ENCODE measurements at regions of chr4 and their contacts with region 1.

Region 1: DNA sequence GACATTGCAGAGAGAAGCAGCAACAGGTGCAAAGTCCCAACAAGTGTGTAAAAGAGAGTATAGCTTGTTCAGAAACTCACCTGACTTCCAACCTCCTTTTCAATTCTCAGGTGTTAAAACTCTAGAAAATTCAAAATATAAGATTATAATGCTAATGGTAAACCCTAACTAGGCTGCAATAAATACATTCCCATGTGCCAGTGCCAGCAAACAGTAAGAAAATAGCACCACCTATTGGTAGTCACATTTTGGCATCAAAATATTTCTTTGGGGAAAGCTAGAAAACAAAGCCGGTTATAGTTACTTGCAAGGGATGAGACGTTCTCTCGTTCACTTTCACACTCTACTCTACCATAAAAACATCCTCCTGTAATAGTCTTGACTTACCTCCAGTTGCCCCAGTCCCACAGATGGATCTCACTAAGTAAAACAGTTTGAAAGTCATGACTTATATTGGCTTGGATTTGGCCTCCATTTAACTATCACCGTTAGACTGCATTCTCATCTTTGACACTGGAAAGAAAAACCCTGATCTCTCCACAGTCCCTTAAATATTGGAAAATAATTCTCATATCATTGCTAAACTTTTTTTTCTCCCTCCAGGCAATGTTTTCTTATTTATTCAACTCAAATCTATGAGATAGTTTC is 9.6 kb downstream of the BMP3 start:
- DNase-seq: peak; percentile 25
- H3K27ac ChIP-seq: no peak overlapping the region
- CTCF ChIP-seq: peak; percentile 52

Region 2: GRCh38 chr4:80362578-80363181 is 677.5 kb before region 1 on chr4:
- CTCF ChIA-PET with region 1: interaction called, 15 read pairs
- POLR2A ChIA-PET with region 1: no interaction called
- DNase-seq: peak; percentile 21
- H3K27ac ChIP-seq: no peak overlapping the region
- CTCF ChIP-seq: peak; percentile 45

Region 3: DNA sequence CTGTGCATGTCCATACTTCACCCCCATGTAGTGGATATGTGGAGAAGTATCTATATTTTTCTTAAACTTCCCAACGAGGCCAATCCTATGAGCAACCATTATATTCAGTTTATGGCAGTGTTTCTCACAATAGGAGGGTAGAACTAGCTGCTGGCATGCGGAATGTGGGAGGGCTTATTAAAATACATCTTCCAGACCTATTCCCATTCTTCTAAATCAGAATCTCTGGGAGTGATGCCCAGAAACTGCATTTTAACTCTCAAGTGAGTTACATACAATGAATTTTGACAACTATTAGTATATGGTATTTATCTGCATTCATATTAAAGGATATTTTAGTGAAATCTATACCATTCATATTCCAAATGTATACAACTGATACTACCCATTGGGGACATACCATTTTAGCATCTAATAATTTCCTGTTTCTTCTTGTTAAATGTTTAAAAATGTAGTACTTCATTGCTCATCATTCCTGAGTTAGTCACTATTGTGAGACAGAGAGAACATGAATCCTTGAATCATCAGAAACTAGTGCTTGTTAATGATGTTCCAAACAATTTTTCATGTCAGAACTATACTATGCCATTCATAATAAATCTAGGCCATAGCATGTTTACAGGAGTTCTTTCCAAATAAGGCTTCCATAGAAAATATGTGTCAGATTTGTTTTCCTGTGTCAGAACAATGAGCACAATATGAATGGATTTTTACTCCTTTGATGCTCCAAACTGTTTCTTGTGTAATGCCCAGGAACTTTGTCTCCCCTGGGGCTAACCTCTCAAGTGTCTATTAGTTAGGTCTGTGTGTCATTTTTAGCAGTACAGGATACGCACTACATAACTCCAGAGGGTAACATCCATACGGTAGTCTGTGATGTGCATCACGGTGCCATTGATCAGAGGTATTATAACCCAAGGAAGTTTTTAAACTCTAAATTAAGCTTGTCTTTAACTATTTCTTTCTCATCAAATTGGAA is 208.5 kb before region 1 on chr4:
- CTCF ChIA-PET with region 1: no interaction called
- POLR2A ChIA-PET with region 1: no interaction called
- DNase-seq: peak; percentile 21
- H3K27ac ChIP-seq: no peak overlapping the region
- CTCF ChIP-seq: no peak

Region 4: DNA sequence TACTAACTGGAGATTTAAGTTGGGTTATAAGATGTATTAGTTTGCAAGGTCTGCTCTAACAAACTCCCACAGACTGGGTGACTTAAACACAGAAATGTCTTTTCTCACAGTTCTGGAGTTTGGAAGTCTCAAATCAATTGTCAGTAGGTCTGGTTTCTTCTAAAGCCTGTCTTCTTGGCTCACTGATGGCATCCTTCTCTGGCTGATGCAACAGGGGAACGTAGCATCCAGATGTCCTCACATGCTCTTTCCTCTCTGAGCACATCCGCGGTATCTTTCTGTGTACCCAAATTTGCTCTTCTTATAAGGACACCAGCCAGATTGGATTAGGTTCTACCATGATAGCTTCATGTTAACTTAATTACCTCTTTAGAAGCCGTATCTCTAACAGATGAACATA is 72.8 kb before region 1 on chr4:
- CTCF ChIA-PET with region 1: no interaction called
- POLR2A ChIA-PET with region 1: no interaction called
- DNase-seq: no peak
- H3K27ac ChIP-seq: no peak overlapping the region
- CTCF ChIP-seq: no peak

Measured in RWPE1 (cell line).